Activated CD4-positive, alpha-beta T cell treated with anti-CD3 and anti-CD28 coated beads for 36 hours (primary cell): ENCODE measurements at regions of chr14 and their contacts with region 1.

Region 1: DNA sequence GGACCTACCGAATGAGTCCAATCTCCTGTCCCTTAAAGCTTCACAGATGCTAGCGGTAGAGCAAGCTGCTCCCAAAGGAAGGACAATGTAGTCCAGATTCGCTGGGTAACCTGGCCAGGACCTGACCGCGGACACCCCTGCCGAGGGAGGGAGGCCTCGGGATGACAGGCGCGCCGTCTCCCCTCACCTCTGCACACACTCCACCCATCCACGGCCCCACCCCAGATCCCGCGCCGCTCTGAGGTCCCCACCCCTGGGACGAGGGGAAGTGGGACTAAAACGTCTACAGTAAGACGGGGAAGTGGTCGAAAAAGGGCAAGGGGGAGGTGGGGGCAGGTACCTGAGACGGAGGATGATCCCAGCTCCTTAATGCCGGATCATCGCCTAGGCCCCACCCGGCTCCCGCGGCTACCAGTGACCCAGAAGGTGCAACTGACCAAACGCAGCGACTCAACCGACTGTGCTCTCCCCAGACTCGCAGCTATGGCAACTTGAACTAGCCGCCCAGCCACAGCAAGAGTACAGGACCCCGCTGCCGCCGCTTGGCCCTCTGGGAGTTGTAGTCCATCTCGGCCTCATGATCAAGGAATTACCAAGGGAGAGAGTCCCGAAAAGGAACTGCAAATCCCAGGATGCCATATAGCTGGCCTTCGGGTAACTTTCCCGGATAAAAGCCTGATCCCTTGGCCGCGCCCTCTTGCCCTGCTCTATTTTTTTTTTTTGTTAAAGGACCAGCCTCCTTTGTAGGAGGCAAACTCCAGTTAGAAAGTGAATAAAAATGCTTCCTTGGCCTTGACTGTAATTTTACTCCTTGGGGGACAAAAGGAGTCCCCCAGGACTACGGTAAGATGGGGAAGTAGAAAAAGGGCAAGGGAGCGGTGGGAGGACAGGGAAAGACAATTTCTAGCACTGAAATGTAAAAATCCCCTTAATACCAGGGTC is at the start of gene CEP128:
- DNase-seq: peak; percentile 93
- ATAC-seq: peak; percentile 85
- H3K4me3 Mint-ChIP-seq: peak within 1 kb of the TSS; percentile 90
- H3K27ac Mint-ChIP-seq: peak within 1 kb of the TSS; percentile 96
- H3K4me1 Mint-ChIP-seq: peaks cover 33% of the 10 kb centered on the region
- H3K27me3 Mint-ChIP-seq: no peaks in the 10 kb centered on the region
- total RNA-seq, gene CEP128: 18.6 to 21.6 TPM

Region 2: GRCh38 chr14:80239631-80240030 is 701.9 kb before region 1 on chr14:
- CTCF ChIA-PET with region 1: no interaction called
- POLR2A ChIA-PET with region 1: no interaction called
- intact Hi-C with region 1: no loop called
- DNase-seq: no peak
- ATAC-seq: no peak
- H3K4me3 Mint-ChIP-seq: no peak overlapping the region
- H3K27ac Mint-ChIP-seq: no peak overlapping the region
- H3K4me1 Mint-ChIP-seq: no peaks in the 10 kb centered on the region
- H3K27me3 Mint-ChIP-seq: no peaks in the 10 kb centered on the region

Region 3: DNA sequence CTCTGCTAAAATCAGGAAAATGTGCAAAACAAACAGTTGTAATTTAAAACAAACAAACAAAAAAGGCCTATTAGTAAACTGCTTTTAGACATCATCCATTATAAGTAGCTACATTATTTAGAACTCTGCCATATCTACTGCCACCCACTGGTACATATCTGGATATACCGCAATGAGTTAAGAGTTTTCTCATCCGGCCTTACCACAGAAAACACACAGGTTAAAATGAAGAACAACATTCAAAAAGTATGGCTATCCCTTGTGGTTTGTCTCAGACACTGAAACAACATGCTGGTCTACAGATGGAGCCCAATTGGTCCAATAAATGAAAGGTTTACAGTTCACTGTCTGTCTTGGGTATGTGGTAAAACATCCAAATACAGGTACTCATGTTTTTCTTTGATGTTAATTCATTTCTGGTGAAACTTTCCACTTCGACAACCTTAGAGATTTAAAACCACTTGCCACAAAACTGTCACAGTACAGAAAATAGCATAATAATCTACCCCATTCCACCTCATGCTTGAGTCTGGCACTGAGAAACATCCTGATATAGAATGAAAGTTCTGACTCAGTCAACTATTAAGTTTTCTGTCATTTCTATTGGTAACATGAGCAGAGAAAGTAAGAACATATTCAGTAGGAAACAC is 354.3 kb before region 1 on chr14:
- CTCF ChIA-PET with region 1: no interaction called
- POLR2A ChIA-PET with region 1: no interaction called
- intact Hi-C with region 1: loop called in 1 of 2 experiments (anchors 1 kb)
- DNase-seq: peak; percentile 18
- ATAC-seq: peak; percentile 92
- H3K4me3 Mint-ChIP-seq: no peak overlapping the region
- H3K27ac Mint-ChIP-seq: peak overlapping the region; percentile 47
- H3K4me1 Mint-ChIP-seq: peaks cover 20% of the 10 kb centered on the region
- H3K27me3 Mint-ChIP-seq: no peaks in the 10 kb centered on the region

Region 4: GRCh38 chr14:80784820-80785219 is 156.7 kb before region 1 on chr14:
- CTCF ChIA-PET with region 1: no interaction called
- POLR2A ChIA-PET with region 1: no interaction called
- intact Hi-C with region 1: no loop called
- DNase-seq: no peak
- ATAC-seq: no peak
- H3K4me3 Mint-ChIP-seq: no peak overlapping the region
- H3K27ac Mint-ChIP-seq: no peak overlapping the region
- H3K4me1 Mint-ChIP-seq: no peaks in the 10 kb centered on the region
- H3K27me3 Mint-ChIP-seq: no peaks in the 10 kb centered on the region

Region 5: GRCh38 chr14:80923368-80923767 is 18.1 kb before region 1 on chr14:
- CTCF ChIA-PET with region 1: no interaction called
- POLR2A ChIA-PET with region 1: no interaction called
- intact Hi-C with region 1: no loop called
- DNase-seq: no peak
- ATAC-seq: no peak
- H3K4me3 Mint-ChIP-seq: no peak overlapping the region
- H3K27ac Mint-ChIP-seq: no peak overlapping the region
- H3K4me1 Mint-ChIP-seq: peaks cover 3% of the 10 kb centered on the region
- H3K27me3 Mint-ChIP-seq: no peaks in the 10 kb centered on the region

Region 6: DNA sequence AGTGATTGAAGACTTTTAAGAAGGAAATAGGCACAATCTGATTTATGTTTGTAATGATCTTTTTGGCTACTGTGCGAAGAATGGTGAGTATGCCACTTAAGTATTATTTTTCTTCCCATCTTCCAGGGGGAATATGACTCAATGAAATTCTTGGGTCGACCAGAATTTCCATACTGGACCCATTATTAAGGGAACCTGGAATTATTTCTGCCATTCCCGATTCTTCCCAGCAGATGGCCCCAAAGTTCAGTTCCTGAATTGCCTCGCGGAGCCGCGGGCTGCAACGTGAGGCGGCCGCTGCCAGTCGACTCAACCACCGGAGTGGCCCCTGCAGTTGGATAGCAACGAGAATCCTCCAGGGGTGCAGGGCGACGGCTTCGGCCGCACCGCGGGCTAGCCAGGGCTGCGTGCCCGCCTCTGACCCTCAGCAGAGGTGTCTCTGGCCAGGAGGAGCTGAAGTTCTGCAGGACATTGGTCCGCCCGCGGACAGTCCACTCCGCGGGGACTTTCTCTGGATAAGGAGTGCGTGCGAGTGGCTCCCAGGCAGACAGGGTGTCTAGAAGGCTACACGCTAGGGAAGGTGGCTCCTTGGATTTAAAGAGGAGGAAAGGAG is 13.3 kb after region 1 on chr14:
- CTCF ChIA-PET with region 1: interaction called, 9 read pairs
- POLR2A ChIA-PET with region 1: interaction called, 3 read pairs
- intact Hi-C with region 1: loop called (anchors 1 to 2 kb)
- DNase-seq: peak; percentile 82
- ATAC-seq: peak; percentile 67
- H3K4me3 Mint-ChIP-seq: peak overlapping the region; percentile 75
- H3K27ac Mint-ChIP-seq: peak overlapping the region; percentile 72
- H3K4me1 Mint-ChIP-seq: peaks cover 41% of the 10 kb centered on the region
- H3K27me3 Mint-ChIP-seq: peaks cover 13% of the 10 kb centered on the region

Region 7: GRCh38 chr14:81400852-81401251 is 459.3 kb after region 1 on chr14:
- CTCF ChIA-PET with region 1: no interaction called
- POLR2A ChIA-PET with region 1: no interaction called
- intact Hi-C with region 1: loop called in 1 of 2 experiments (anchors 2 kb)
- DNase-seq: peak; percentile 50
- ATAC-seq: peak; percentile 61
- H3K4me3 Mint-ChIP-seq: no peak overlapping the region
- H3K27ac Mint-ChIP-seq: no peak overlapping the region
- H3K4me1 Mint-ChIP-seq: peaks cover 15% of the 10 kb centered on the region
- H3K27me3 Mint-ChIP-seq: peaks cover 12% of the 10 kb centered on the region

Region 8: DNA sequence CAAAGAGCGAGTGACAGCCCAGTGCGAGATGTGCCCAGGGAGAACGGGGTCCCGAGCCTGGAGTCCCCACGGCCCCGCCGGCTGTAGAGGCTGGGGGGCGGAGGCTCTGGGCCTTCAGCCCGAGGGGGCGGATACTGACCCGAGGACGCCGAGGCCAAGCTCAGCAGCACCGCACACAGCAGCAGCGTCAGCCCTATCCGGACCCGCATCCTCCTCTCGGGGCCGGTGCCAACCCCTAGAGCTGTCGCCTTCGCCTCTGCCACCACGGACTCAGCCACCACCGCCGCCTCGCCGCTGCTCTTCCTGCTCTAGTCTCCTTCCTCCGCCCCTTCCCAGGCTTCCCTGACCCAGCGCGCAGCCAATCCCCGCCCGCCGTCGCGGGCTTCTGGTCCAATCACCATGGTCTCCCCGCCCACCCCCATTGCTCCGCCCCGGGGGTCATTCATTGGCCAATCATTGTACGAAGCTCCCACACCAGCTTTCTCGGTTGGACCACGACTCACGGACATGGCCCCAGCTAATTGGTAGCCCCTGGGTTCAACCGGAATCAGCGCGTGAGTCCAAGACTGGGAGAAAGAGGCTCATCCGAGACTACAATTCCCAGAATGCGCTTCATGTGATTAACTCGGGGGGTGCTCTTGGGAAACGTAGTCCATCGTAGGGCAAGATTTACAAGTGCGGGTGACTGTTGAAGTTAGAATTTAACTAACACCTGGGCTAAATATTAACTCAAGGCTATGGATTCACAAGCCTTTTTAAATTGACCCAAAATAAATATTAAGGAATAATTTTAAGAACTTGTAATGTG is 592.2 kb after region 1 on chr14 and contains the start of gene SEL1L:
- CTCF ChIA-PET with region 1: no interaction called
- POLR2A ChIA-PET with region 1: no interaction called
- intact Hi-C with region 1: loop called (anchors 2 to 10 kb)
- DNase-seq: peak; percentile 99
- ATAC-seq: peak; percentile 97
- H3K4me3 Mint-ChIP-seq: peak within 1 kb of the TSS; percentile 94
- H3K27ac Mint-ChIP-seq: peak within 1 kb of the TSS; percentile 82
- H3K4me1 Mint-ChIP-seq: peaks cover 54% of the 10 kb centered on the region
- H3K27me3 Mint-ChIP-seq: no peaks in the 10 kb centered on the region
- total RNA-seq, gene SEL1L: 39.0 to 57.4 TPM